MCF 10A (cell line): ENCODE measurements at regions of chr17 and their contacts with region 1.

Region 1: DNA sequence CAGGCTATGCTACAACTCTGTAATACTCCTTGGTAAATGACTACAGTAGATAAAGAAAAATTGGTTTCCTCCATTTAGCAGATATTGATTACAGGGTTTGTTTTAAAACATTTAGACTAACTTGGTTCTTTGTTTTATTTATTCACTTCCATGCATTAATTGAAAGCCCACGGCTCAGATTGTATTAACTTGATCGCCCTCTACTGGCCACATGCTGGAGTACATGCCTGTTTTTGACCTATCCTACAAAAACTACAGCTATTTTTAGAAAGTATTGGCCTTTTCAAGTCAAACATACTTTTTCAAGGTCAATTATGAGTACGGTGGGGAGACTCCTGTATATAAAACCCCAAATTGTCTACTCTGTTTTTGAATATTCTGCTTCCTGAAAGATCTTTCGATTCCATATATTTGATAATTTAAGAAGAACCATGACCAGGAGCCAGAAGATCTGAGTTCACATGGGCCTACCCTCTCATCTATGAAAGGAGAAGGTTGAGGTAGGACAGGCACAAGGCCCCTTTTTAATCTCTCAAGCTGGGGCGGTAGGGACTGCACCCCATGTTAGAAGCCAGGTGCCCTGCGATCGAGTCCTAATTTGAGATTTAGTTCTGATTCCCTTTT is 51.8 kb downstream of the CA10 start:
- DNase-seq: peak; percentile 61
- H3K4me3 Mint-ChIP-seq: no peak overlapping the region
- H3K27ac Mint-ChIP-seq: no peak overlapping the region
- H3K4me1 Mint-ChIP-seq: no peaks in the 10 kb centered on the region
- H3K27me3 Mint-ChIP-seq: peaks cover 32% of the 10 kb centered on the region
- CTCF ChIP-seq: peak; percentile 77

Region 2: DNA sequence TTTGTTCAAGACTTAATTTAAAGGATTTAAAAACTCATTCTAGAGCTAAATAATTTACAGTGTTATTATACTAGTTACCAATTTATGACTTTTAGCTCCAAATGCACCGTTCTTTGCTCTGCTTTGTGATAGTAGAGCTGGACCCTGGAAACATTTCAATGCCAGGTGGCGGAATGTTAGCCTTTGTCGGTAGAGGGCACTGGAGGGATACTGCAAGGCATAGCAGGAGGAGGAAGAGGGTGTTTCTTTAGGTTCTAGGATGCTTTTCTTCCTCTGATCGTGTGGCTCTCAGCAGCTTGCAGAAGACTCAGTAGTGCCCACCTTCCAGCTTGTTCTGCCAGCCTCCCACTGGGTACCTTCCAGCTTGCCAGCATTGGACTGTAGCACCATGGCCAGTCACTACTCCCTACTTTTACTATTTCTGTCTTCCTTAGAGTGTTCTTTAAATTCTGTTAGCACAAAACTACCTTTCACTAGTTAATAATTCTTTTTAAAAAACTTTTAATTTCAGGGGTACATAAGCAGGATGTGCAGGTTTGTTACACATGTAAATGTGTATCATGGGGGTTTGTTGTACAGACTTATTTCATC is 521.1 kb before region 1 on chr17:
- CTCF ChIA-PET with region 1: interaction called, 28 read pairs
- POLR2A ChIA-PET with region 1: no interaction called
- intact Hi-C with region 1: loop called (anchors 1 kb)
- DNase-seq: peak; percentile 58
- H3K4me3 Mint-ChIP-seq: no peak overlapping the region
- H3K27ac Mint-ChIP-seq: no peak overlapping the region
- H3K4me1 Mint-ChIP-seq: no peaks in the 10 kb centered on the region
- H3K27me3 Mint-ChIP-seq: peaks cover 12% of the 10 kb centered on the region
- CTCF ChIP-seq: peak; percentile 55

Region 3: DNA sequence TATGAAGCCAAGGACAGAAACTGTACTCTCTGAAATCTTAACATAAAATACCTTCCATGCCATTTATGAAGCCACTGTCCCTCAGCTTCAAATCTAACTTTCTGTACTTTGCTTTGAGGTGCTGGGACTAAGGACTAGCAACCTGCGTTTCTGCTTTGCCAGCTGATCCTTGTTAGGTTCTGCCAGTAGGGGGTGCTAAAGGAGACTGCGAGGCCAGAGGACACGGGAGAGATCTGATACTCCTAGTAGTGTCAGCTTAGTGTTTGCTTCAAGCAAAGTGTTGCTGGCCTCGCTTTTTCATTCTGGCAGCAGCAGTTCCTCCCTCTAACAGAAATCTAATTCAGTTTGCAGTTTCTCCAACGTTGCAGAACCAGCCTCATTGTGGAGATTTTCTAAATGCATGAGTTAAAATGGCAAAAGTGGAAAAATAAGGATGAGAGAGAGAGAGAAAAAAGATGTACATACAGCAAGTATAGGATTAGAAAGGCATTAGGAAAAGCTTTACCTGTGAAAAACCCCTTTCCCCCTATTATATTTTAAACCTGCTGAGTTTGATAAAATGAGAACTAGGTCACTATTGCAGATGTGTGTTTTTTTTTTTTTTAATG is 245.7 kb before region 1 on chr17:
- CTCF ChIA-PET with region 1: interaction called, 3 read pairs
- POLR2A ChIA-PET with region 1: no interaction called
- intact Hi-C with region 1: loop called (anchors 1 kb)
- DNase-seq: peak; percentile 64
- H3K4me3 Mint-ChIP-seq: no peak overlapping the region
- H3K27ac Mint-ChIP-seq: no peak overlapping the region
- H3K4me1 Mint-ChIP-seq: no peaks in the 10 kb centered on the region
- H3K27me3 Mint-ChIP-seq: peaks cover 43% of the 10 kb centered on the region
- CTCF ChIP-seq: peak; percentile 62

Region 4: GRCh38 chr17:52120465-52120864 is 13.7 kb after region 1 on chr17:
- CTCF ChIA-PET with region 1: interaction called, 28 read pairs
- POLR2A ChIA-PET with region 1: no interaction called
- intact Hi-C with region 1: no loop called
- DNase-seq: no peak
- H3K4me3 Mint-ChIP-seq: no peak overlapping the region
- H3K27ac Mint-ChIP-seq: peak overlapping the region; percentile 65
- H3K4me1 Mint-ChIP-seq: no peaks in the 10 kb centered on the region
- H3K27me3 Mint-ChIP-seq: peaks cover 12% of the 10 kb centered on the region
- CTCF ChIP-seq: no peak

Region 5: GRCh38 chr17:52136166-52136565 is 29.4 kb after region 1 on chr17:
- CTCF ChIA-PET with region 1: interaction called, 28 read pairs
- POLR2A ChIA-PET with region 1: no interaction called
- intact Hi-C with region 1: no loop called
- DNase-seq: no peak
- H3K4me3 Mint-ChIP-seq: no peak overlapping the region
- H3K27ac Mint-ChIP-seq: no peak overlapping the region
- H3K4me1 Mint-ChIP-seq: no peaks in the 10 kb centered on the region
- H3K27me3 Mint-ChIP-seq: no peaks in the 10 kb centered on the region
- CTCF ChIP-seq: no peak

Region 6: DNA sequence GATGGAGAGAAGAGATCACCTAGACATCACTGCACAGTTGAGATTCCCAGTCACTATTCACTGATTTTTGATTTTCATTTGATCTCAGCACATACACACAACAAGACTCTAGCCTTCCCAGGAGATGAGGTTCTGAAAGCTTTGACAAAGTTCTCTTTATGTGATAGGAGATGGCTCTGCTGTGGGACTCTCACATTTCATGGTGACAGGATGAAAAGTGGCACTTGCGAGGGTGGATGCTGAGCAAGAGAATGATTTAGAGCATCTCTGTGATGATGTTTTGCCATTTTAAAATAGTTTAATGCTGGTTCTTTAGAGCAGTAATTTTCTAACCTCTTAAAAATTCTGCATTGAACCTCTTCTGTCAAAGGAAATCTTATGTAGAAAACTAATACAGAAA is 165.0 kb after region 1 on chr17:
- CTCF ChIA-PET with region 1: no interaction called
- POLR2A ChIA-PET with region 1: no interaction called
- intact Hi-C with region 1: no loop called
- DNase-seq: no peak
- H3K4me3 Mint-ChIP-seq: no peak overlapping the region
- H3K27ac Mint-ChIP-seq: no peak overlapping the region
- H3K4me1 Mint-ChIP-seq: no peaks in the 10 kb centered on the region
- H3K27me3 Mint-ChIP-seq: peaks cover 46% of the 10 kb centered on the region
- CTCF ChIP-seq: no peak